ENCODE measurements at regions of chr1 and their contacts with region 1.

Region 1: GRCh38 chr1:30707412-30708360 is 15.7 kb downstream of the MATN1 start:
- DNase-seq: peak; percentile 66 to 81 (median 76)
- ATAC-seq: peak; percentile 82 to 90 (median 87)
- H3K4me3 ChIP-seq: no peak overlapping the region
- H3K27ac ChIP-seq: no peak overlapping the region
- H3K4me1 ChIP-seq: peaks cover 0 to 26% (median 6%) of the 10 kb centered on the region in 12 donors
- H3K27me3 ChIP-seq: peaks cover 0 to 7% (median 0%) of the 10 kb centered on the region in 9 donors
- CTCF ChIP-seq: peak; percentile 46 to 85 (median 75)
- POLR2A ChIP-seq: no peak

Region 2: DNA sequence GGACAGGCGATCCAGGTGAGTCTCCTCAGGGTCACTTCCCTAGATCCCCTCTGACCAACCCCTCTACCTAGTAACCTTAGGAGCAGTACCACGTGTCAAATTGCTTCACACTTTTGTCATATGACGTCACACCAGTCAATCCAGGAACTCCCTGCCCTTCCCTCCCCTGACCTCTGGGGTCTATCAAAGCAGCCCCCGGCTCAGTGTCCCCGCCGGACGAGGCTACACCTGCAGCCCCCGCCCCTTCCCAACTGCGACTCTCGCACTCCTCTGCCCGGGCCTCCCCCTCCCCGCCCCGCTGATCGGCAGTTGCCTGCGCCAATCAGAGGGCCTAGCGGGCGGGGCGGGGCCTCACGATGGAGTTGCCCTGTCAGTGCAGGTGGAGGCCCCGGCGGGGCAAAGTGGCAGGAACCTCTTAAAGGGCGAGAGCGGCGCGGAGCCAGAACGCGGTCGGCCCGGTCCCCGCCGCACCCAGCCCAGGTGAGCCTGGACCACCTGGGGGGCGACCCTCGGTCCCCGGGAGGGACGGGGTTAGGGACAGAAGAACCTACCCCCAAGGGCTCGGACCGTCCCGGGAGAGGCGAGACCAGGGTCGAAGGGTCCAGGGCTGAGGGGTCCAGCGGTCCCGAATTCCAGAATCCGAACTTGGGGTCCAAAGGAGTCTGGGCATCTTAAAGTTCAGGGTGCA is 1820.8 kb before region 1 on chr1:
- intact Hi-C with region 1: loop called in 5 of 10 experiments (anchors 5 to 10 kb)
- DNase-seq: peak; percentile 83 to 94 (median 87)
- ATAC-seq: peak; percentile 76 to 85 (median 82)
- H3K4me3 ChIP-seq: peak overlapping the region; percentile 60 to 94 (median 87)
- H3K27ac ChIP-seq: peak overlapping the region; percentile 53 to 90 (median 84)
- H3K4me1 ChIP-seq: peaks cover 0 to 55% (median 16%) of the 10 kb centered on the region in 12 donors
- H3K27me3 ChIP-seq: peaks cover 0 to 10% (median 0%) of the 10 kb centered on the region in 9 donors
- CTCF ChIP-seq: no peak
- POLR2A ChIP-seq: peak; percentile 54 to 70

Region 3: GRCh38 chr1:29513357-29513756 is 1194.3 kb before region 1 on chr1:
- intact Hi-C with region 1: loop called in 1 of 10 experiments (anchors 5 kb)
- DNase-seq: peak in 2 of 5 donors; percentile 47 to 59
- ATAC-seq: peak; percentile 75 to 94 (median 84)
- H3K4me3 ChIP-seq: no peak overlapping the region
- H3K27ac ChIP-seq: no peak overlapping the region
- H3K4me1 ChIP-seq: no peaks in the 10 kb centered on the region
- H3K27me3 ChIP-seq: peaks cover 0 to 18% (median 6%) of the 10 kb centered on the region in 9 donors
- CTCF ChIP-seq: peak in 11 of 12 donors; percentile 14 to 60 (median 44)
- POLR2A ChIP-seq: no peak

Region 4: GRCh38 chr1:30106125-30106524 is 601.6 kb before region 1 on chr1:
- intact Hi-C with region 1: loop called in 1 of 10 experiments (anchors 10 kb)
- DNase-seq: peak in 1 of 5 donors; percentile 28
- ATAC-seq: peak in 3 of 4 donors; percentile 35 to 70 (median 65)
- H3K4me3 ChIP-seq: no peak overlapping the region
- H3K27ac ChIP-seq: no peak overlapping the region
- H3K4me1 ChIP-seq: no peaks in the 10 kb centered on the region
- H3K27me3 ChIP-seq: peaks cover 0 to 67% (median 11%) of the 10 kb centered on the region in 9 donors
- CTCF ChIP-seq: peak; percentile 19 to 65 (median 35)
- POLR2A ChIP-seq: no peak

Region 5: DNA sequence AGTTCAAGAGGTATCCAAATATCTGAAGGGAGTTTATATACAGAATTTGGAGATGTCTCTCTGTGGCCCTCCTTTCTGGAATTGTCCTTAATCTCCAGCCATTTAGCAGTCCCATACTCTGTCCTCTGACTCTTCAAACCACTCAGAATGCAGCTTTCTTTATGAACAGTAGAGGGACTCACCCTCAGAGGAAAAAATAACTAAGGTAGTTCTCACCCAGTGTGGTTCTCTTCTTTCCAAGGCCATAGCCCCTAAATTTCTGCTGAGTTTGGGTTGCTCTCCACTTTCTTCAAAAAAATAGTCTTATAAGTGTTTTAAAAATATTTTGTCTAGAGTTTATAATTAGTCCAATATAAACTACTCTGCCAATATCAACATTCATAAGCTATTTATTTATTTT is 354.0 kb before region 1 on chr1:
- intact Hi-C with region 1: loop called in 4 of 10 experiments (anchors 10 kb)
- DNase-seq: no peak
- ATAC-seq: peak in 3 of 4 donors; percentile 57 to 69 (median 59)
- H3K4me3 ChIP-seq: no peak overlapping the region
- H3K27ac ChIP-seq: no peak overlapping the region
- H3K4me1 ChIP-seq: no peaks in the 10 kb centered on the region
- H3K27me3 ChIP-seq: peaks cover 0 to 26% (median 0%) of the 10 kb centered on the region in 9 donors
- CTCF ChIP-seq: peak in 10 of 12 donors; percentile 5 to 47 (median 25)
- POLR2A ChIP-seq: no peak

Region 6: DNA sequence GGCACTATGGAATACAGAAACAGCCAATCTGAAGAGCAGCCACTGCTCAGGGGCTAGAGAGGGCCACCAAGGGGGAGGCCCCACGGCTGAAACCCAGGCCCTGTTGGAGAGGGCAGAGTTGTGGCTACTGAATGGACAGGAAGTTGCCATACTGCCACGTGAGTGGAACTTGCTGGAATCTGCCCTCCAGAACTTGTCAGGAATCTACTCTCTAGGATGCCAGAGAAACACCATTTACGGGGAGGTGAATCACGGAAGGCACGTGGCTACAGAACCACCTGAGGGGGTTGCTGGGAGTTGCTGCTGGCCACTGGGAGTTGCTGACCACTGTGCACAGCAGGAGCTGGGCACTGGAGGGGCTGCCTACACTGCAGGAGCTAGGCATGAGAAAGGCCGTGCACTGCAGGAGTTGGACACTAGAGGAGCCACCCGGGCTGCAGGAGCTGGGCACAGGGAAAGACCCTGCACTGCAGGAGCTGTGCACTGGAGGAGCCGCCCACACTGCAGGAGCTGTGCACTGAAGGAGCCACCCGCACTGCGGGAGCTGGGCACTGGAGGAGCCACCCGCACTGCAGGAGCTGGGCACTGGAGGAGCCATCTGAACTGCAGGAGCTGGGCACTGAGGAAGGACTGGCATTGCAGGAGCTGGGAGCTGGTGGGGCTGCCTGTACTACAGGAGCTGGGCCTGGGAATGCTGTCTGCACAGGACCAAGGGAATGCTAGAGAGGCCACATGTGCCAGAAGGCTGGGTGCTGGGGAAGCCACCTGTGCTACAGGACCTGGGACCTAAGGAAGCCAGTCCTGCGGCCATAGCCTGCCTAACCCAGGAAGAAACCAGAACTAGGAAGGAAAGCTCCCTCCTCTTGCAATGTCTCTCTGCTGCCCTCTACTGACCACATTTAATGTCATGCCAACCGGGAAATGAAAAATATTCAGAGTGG is 327.7 kb before region 1 on chr1:
- intact Hi-C with region 1: loop called in 2 of 10 experiments (anchors 10 kb)
- DNase-seq: peak in 3 of 5 donors; percentile 43 to 47 (median 43)
- ATAC-seq: peak; percentile 32 to 82 (median 76)
- H3K4me3 ChIP-seq: no peak overlapping the region
- H3K27ac ChIP-seq: no peak overlapping the region
- H3K4me1 ChIP-seq: peaks cover 0 to 6% (median 0%) of the 10 kb centered on the region in 12 donors
- H3K27me3 ChIP-seq: peaks cover 0 to 30% (median 4%) of the 10 kb centered on the region in 9 donors
- CTCF ChIP-seq: peak; percentile 72 to 94 (median 86)
- POLR2A ChIP-seq: no peak

Region 7: GRCh38 chr1:30525971-30526651 is 181.6 kb before region 1 on chr1:
- intact Hi-C with region 1: loop called in 2 of 10 experiments (anchors 5 to 10 kb)
- DNase-seq: peak in 4 of 5 donors; percentile 28 to 83 (median 42)
- ATAC-seq: peak in 3 of 4 donors; percentile 5 to 30 (median 25)
- H3K4me3 ChIP-seq: no peak overlapping the region
- H3K27ac ChIP-seq: peak overlapping the region; percentile 51 to 98 (median 83)
- H3K4me1 ChIP-seq: peaks cover 0 to 62% (median 26%) of the 10 kb centered on the region in 12 donors
- H3K27me3 ChIP-seq: peaks cover 0 to 12% (median 0%) of the 10 kb centered on the region in 9 donors
- CTCF ChIP-seq: no peak
- POLR2A ChIP-seq: no peak